ENCODE measurements at regions of chr10 and their contacts with region 1.

Region 1: DNA sequence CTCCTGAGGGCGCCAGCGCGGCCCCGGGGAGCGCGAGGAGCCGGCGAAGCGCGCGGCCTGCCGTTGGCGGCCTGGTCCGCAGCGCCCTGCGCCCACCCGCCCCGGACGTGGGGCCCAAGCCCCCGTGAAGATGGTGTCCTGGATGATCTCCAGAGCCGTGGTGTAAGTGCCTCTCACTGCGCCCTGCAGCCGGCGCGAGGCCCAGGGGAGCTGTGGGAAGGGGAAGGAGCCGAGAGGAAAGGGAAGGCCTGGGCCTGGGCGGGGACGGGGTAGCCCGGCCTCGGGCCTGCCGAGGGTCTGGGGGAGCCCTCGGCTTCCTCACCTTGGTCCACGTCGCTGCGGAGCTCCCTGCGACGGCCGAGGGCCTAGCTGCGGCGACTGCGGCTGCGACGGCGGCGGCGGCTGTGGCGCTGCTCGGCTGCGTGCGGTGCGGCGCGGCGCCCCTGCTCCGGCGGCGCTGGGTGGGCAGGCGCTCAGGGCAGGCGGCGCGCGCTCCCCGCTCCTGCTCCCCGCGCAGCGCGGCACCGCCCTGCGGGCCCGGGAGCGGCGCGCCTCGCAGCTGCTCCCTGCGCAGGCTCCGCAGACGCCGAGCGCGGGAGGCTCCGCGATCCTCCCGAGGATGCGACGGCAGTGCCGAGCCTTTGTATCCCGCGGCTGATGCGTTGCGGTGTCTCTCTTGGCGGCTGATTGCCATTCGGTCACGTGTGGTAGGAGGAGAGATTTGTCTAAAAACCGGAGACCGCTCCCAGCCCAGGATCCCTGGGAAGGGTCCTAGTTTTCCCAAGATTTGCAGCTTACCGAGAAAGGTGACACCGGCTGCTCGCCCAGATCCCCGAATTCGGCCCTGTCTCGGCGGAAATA is 445 bp downstream of the REEP3 start:
- DNase-seq: peak; percentile 68 to 72
- ATAC-seq: peak; percentile 70 to 91 (median 86)
- H3K4me3 ChIP-seq: peak overlapping the region; percentile 51 to 91 (median 80)
- H3K27ac ChIP-seq: peak overlapping the region; percentile 97 to 99 (median 99)
- H3K4me1 ChIP-seq: peaks cover 0 to 80% (median 58%) of the 10 kb centered on the region in 9 donors
- H3K27me3 ChIP-seq: no peaks in the 10 kb centered on the region
- CTCF ChIP-seq: no peak

Region 2: DNA sequence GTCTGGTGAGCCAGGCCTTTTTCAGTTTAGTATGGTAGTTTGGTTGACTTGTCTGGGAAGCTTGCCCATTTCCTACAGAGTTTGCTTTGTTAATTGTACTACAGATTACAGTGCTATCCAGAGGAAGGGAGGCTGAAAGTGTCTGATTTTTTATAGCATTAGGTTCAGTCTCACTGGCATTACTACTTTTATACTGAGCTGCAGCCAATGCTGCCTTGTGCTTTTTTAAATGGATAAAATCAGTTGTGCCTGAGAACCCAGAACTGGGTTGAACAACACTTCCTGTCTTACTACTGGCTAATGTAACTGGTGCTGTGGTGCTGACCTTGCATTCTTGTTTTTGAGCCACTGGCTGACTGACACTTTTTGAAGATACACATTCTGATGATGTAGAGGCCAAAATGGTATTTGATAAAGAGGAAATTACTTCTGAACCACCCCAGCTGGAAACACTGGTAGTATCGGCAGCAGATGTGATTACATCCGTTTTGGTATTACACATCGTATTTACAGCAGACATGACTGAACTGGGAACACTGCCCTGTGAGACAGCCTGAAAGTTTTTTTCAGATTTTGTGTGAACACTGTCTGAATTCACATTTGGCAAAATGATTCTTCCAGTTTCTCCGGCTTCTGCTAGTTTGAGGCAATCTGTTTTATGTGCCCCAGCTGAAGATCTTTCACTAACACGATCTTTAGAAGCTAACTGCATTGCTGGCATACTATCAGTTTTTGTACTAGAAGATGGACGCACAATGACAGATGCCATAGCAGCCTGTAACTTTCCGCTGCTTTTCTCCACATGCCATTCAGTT is 314.4 kb before region 1 on chr10:
- intact Hi-C with region 1: loop called in 2 of 10 experiments (anchors 5 to 10 kb)
- DNase-seq: peak in 1 of 2 donors; percentile 51
- ATAC-seq: peak; percentile 66 to 83 (median 80)
- H3K4me3 ChIP-seq: peak overlapping the region in 4 of 10 donors; percentile 9 to 26 (median 18)
- H3K27ac ChIP-seq: peak overlapping the region; percentile 7 to 80 (median 74)
- H3K4me1 ChIP-seq: peaks cover 0 to 78% (median 72%) of the 10 kb centered on the region in 9 donors
- H3K27me3 ChIP-seq: no peaks in the 10 kb centered on the region
- CTCF ChIP-seq: no peak

Region 3: DNA sequence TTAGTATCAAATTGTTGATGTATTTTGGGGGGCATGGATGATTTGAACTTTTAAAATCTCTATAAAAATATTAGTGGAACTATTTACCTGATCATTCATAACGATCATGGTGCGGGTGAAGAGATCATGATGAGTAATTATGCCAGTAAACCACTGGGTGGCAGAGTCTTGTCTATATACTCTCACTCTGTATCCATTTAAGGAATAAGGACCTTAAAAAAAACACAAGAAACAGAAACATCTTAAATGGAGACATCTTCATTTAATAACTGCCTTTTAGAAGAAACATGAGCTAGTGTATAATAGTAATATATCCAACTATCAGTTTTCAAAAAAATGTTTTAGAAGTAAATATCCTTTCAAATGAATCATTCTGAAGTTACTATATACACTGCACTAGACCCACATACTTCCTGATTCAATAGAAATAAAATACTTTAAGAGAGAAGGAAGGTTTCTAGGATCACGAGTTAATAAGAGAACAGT is 304.5 kb before region 1 on chr10:
- intact Hi-C with region 1: loop called in 1 of 10 experiments (anchors 10 kb)
- DNase-seq: peak in 1 of 2 donors; percentile 30
- ATAC-seq: peak; percentile 62 to 82 (median 77)
- H3K4me3 ChIP-seq: no peak overlapping the region
- H3K27ac ChIP-seq: peak overlapping the region in 4 of 10 donors; percentile 1 to 40 (median 14)
- H3K4me1 ChIP-seq: peaks cover 0 to 63% (median 43%) of the 10 kb centered on the region in 9 donors
- H3K27me3 ChIP-seq: no peaks in the 10 kb centered on the region
- CTCF ChIP-seq: peak; percentile 46 to 86 (median 70)

Region 4: GRCh38 chr10:63573068-63573697 is 51.5 kb after region 1 on chr10:
- intact Hi-C with region 1: loop called in 1 of 10 experiments (anchors 5 kb)
- DNase-seq: no peak
- ATAC-seq: peak in 7 of 8 donors; percentile 27 to 74 (median 67)
- H3K4me3 ChIP-seq: peak overlapping the region in 1 of 10 donors; percentile 10
- H3K27ac ChIP-seq: peak overlapping the region; percentile 13 to 74 (median 52)
- H3K4me1 ChIP-seq: peaks cover 13 to 54% (median 42%) of the 10 kb centered on the region in 9 donors
- H3K27me3 ChIP-seq: no peaks in the 10 kb centered on the region
- CTCF ChIP-seq: no peak

Region 5: GRCh38 chr10:63595072-63595471 is 73.4 kb after region 1 on chr10:
- intact Hi-C with region 1: no loop called
- DNase-seq: peak in 1 of 2 donors; percentile 64
- ATAC-seq: peak; percentile 76 to 95 (median 86)
- H3K4me3 ChIP-seq: no peak overlapping the region
- H3K27ac ChIP-seq: peak overlapping the region in 4 of 10 donors; percentile 41 to 50 (median 44)
- H3K4me1 ChIP-seq: peaks cover 0 to 34% (median 18%) of the 10 kb centered on the region in 9 donors
- H3K27me3 ChIP-seq: no peaks in the 10 kb centered on the region
- CTCF ChIP-seq: peak in 7 of 9 donors; percentile 13 to 45 (median 26)